ENCODE measurements at regions of chr13 and their contacts with region 1.

Region 1: GRCh38 chr13:101144808-101145419 is 271.4 kb downstream of the NALCN start:
- DNase-seq: no peak
- ATAC-seq: no peak
- H3K4me3 Mint-ChIP-seq: no peak overlapping the region
- H3K27ac Mint-ChIP-seq: no peak overlapping the region
- H3K4me1 Mint-ChIP-seq: no peaks in the 10 kb centered on the region
- H3K27me3 Mint-ChIP-seq: peaks cover 35% of the 10 kb centered on the region

Region 2: DNA sequence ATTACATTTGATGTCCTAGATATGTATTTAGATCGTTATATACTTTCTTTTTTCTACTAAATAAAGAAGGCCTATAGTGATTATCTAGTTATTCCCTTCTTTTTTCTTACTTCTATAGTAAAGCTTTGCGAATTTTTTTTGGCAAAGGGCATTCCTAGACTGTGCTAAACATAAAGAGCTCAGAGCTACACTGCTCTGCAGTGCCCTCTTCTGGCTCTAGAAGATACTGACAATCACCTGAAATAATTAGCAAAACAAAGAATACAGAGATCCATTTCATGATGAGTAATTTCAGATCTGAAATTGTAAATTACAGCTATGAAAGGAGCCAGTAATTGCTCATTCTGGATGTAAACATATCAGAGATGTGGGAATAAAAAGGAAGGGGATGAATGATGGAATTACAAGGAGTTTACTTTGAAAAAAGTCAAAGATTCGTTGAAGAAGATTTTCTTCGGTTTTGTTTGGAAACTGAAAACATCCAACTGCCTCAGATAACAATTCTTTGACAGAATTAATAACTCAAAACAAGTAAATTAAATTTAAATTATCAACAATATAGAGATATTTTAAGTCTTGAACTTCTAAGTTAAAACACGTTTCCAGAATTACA is 17.1 kb before region 1 on chr13:
- CTCF ChIA-PET with region 1: interaction called, 10 read pairs
- DNase-seq: no peak
- ATAC-seq: peak; percentile 49
- H3K4me3 Mint-ChIP-seq: no peak overlapping the region
- H3K27ac Mint-ChIP-seq: no peak overlapping the region
- H3K4me1 Mint-ChIP-seq: no peaks in the 10 kb centered on the region
- H3K27me3 Mint-ChIP-seq: peaks cover 14% of the 10 kb centered on the region